CD4-positive, alpha-beta T cell (primary cell): ENCODE measurements at regions of chr11 and their contacts with region 1.

Region 1: DNA sequence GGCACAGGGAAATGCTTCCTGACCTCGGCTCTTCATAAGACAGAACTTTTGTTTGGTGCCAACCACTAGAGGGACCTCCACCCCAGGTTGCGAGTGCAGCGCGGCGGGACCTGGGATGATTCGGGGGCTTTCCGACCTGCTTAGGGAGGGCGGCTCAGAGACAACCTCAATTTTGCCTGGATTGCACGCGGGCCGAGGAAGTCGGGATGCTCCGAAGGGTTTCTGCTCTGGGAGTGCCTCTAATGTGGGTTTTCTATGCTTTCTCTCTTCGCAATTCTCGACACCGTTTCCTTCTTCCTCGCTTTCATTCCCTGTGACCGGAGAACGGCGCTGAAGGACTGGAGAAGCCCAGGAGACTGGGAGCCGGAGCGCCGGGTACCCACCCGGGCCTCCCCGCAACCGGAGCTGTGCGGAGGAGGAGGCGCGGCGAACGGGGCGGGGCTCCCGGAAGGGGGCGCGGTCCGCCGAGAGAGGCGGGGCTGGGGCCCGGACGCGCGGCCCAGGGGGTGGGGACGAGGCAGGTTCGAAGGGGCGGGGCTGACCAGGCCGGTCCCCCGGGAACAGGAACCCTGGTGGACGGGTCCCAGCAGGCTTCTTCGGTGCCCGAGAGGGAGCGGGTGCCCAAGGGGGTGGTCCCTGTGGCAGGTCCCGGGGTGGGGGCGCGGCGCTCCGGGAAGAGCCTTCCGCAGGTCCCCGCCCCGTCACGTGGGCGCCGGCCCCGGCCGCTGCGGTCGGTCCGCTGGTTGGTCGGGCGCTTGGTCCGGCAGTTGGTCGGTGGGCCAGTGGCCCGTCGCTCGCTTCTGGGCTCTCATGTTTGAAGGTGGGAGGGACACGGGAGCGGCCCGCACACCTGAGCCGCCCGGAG is at the start of gene PPFIBP2:
- DNase-seq: peak; percentile 70 to 91 (median 80)
- ATAC-seq: peak; percentile 86
- H3K4me3 ChIP-seq: peak within 1 kb of the TSS; percentile 99
- H3K4me3 Mint-ChIP-seq: peak within 1 kb of the TSS; percentile 99
- H3K27ac ChIP-seq: peak within 1 kb of the TSS; percentile 81 to 84
- H3K27ac Mint-ChIP-seq: peak within 1 kb of the TSS; percentile 97
- H3K4me1 ChIP-seq: peaks cover 18% of the 10 kb centered on the region
- H3K4me1 Mint-ChIP-seq: peaks cover 64% of the 10 kb centered on the region
- H3K27me3 ChIP-seq: no peaks in the 10 kb centered on the region
- H3K27me3 Mint-ChIP-seq: no peaks in the 10 kb centered on the region
- CTCF ChIP-seq: peak; percentile 92
- total RNA-seq, gene PPFIBP2: 27.0 to 35.9 TPM

Region 2: GRCh38 chr11:6419009-6419631 is 1094.3 kb before region 1 on chr11 and contains the start of gene APBB1:
- CTCF ChIA-PET with region 1: no interaction called
- POLR2A ChIA-PET with region 1: no interaction called
- intact Hi-C with region 1: loop called in 1 of 2 experiments (anchors 10 kb)
- DNase-seq: peak; percentile 61 to 91 (median 74)
- ATAC-seq: peak; percentile 68
- H3K4me3 ChIP-seq: peak within 1 kb of the TSS; percentile 70
- H3K4me3 Mint-ChIP-seq: peak within 1 kb of the TSS; percentile 91
- H3K27ac ChIP-seq: peak within 1 kb of the TSS; percentile 49 to 92
- H3K27ac Mint-ChIP-seq: peak within 1 kb of the TSS; percentile 89
- H3K4me1 ChIP-seq: peaks cover 49% of the 10 kb centered on the region
- H3K4me1 Mint-ChIP-seq: peaks cover 10% of the 10 kb centered on the region
- H3K27me3 ChIP-seq: no peaks in the 10 kb centered on the region
- H3K27me3 Mint-ChIP-seq: peaks cover 7% of the 10 kb centered on the region
- CTCF ChIP-seq: no peak
- total RNA-seq, gene APBB1: 182 to 184 TPM

Region 3: GRCh38 chr11:7422544-7423331 is 90.7 kb before region 1 on chr11:
- CTCF ChIA-PET with region 1: no interaction called
- POLR2A ChIA-PET with region 1: no interaction called
- intact Hi-C with region 1: no loop called
- DNase-seq: peak in 3 of 14 experiments; percentile 7 to 24 (median 11)
- ATAC-seq: peak; percentile 32
- H3K4me3 ChIP-seq: no peak overlapping the region
- H3K4me3 Mint-ChIP-seq: no peak overlapping the region
- H3K27ac ChIP-seq: no peak overlapping the region
- H3K27ac Mint-ChIP-seq: no peak overlapping the region
- H3K4me1 ChIP-seq: peaks cover 13% of the 10 kb centered on the region
- H3K4me1 Mint-ChIP-seq: peaks cover 17% of the 10 kb centered on the region
- H3K27me3 ChIP-seq: no peaks in the 10 kb centered on the region
- H3K27me3 Mint-ChIP-seq: no peaks in the 10 kb centered on the region
- CTCF ChIP-seq: no peak

Region 4: GRCh38 chr11:7527029-7527428 is 13.6 kb after region 1 on chr11:
- CTCF ChIA-PET with region 1: interaction called, 9 read pairs
- POLR2A ChIA-PET with region 1: interaction called, 30 read pairs
- intact Hi-C with region 1: loop called in 1 of 2 experiments (anchors 1 kb)
- DNase-seq: peak in 12 of 14 experiments; percentile 8 to 84 (median 38)
- ATAC-seq: peak; percentile 97
- H3K4me3 ChIP-seq: peak overlapping the region; percentile 20
- H3K4me3 Mint-ChIP-seq: peak overlapping the region; percentile 43
- H3K27ac ChIP-seq: peak overlapping the region in 1 of 2 donors; percentile 46
- H3K27ac Mint-ChIP-seq: peak overlapping the region; percentile 86
- H3K4me1 ChIP-seq: peaks cover 20% of the 10 kb centered on the region
- H3K4me1 Mint-ChIP-seq: peaks cover 86% of the 10 kb centered on the region
- H3K27me3 ChIP-seq: no peaks in the 10 kb centered on the region
- H3K27me3 Mint-ChIP-seq: no peaks in the 10 kb centered on the region
- CTCF ChIP-seq: no peak

Region 5: GRCh38 chr11:7548659-7549274 is 35.3 kb after region 1 on chr11:
- CTCF ChIA-PET with region 1: interaction called, 3 read pairs
- POLR2A ChIA-PET with region 1: interaction called, 3 read pairs
- intact Hi-C with region 1: loop called (anchors 1 kb)
- DNase-seq: peak in 6 of 14 experiments; percentile 5 to 55 (median 32)
- ATAC-seq: peak; percentile 82
- H3K4me3 ChIP-seq: no peak overlapping the region
- H3K4me3 Mint-ChIP-seq: no peak overlapping the region
- H3K27ac ChIP-seq: no peak overlapping the region
- H3K27ac Mint-ChIP-seq: no peak overlapping the region
- H3K4me1 ChIP-seq: no peaks in the 10 kb centered on the region
- H3K4me1 Mint-ChIP-seq: peaks cover 26% of the 10 kb centered on the region
- H3K27me3 ChIP-seq: no peaks in the 10 kb centered on the region
- H3K27me3 Mint-ChIP-seq: no peaks in the 10 kb centered on the region
- CTCF ChIP-seq: peak; percentile 57

Region 6: DNA sequence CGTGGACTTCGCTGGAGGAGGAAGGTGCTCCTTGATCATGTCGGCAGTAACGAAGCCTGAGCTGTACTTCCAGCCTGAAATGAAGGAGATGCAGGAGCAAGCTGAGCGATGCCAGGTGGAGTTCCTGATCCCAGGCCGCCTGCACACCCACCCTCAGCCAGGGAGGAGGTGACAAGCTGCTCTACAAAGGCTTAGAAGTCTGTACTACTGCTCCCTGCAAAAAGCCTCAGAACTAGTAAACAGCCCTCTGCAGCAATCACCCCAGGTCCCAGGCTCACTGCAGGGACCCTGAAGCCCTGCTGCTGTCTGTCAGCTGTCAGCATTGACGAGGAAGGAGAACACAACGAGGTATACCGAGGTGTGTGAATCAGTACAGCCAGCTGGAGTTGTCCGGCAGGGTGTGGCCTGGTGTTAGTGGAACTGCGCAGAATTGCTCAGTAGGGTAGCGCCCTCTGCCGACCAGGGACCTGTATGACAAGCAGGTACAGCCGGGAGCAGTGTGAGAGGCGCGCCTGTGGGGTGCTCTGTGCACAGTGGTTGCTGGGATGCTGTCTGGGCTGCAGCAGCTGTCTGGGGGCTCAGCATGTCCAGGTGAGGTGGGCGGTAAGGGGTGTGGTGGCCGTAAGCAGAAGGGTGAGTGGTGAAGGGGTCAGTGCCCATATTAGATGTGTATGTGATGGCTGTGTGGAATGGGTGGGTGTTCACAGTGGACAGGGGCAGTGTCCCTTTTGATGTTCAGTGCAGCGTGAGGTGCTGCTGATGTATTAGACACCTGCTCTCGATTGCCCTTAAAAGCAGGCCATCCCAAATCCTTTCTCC is 152.2 kb after region 1 on chr11:
- CTCF ChIA-PET with region 1: interaction called, 10 read pairs
- POLR2A ChIA-PET with region 1: no interaction called
- intact Hi-C with region 1: loop called (anchors 1 kb)
- DNase-seq: peak; percentile 39 to 82 (median 60)
- ATAC-seq: peak; percentile 97
- H3K4me3 ChIP-seq: no peak overlapping the region
- H3K4me3 Mint-ChIP-seq: no peak overlapping the region
- H3K27ac ChIP-seq: no peak overlapping the region
- H3K27ac Mint-ChIP-seq: no peak overlapping the region
- H3K4me1 ChIP-seq: no peaks in the 10 kb centered on the region
- H3K4me1 Mint-ChIP-seq: no peaks in the 10 kb centered on the region
- H3K27me3 ChIP-seq: peaks cover 0 to 3% of the 10 kb centered on the region in 2 experiments
- H3K27me3 Mint-ChIP-seq: peaks cover 8% of the 10 kb centered on the region
- CTCF ChIP-seq: peak; percentile 93

Region 7: DNA sequence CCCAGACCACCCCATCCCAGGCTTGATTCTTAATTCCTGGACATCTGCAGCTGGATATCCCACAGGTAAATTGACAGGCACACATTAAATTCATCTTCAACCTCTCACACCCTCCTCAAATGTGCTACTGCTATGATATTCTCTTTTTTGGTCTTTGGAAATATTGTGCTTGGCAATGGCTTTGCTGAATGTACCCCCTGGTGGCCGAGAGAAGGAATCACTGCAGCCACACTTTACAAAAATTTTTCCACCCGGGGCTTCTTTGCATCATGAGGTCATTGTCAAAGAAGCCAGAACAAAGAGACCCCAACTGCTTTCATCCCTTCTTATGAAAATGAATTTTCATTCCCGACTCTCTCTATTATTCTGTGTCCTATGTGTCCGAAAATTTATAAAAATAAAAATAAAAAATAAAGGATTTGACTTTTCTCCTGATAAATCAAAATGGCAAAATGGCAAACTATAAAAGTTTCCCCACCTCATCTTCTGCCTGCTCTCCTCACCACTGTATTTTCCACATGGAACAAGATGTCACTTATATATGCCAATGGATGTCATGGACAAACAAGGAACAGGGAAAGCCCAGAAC is 174.9 kb after region 1 on chr11:
- CTCF ChIA-PET with region 1: no interaction called
- POLR2A ChIA-PET with region 1: no interaction called
- intact Hi-C with region 1: loop called in 1 of 2 experiments (anchors 2 kb)
- DNase-seq: peak in 4 of 14 experiments; percentile 13 to 55 (median 36)
- ATAC-seq: peak; percentile 51
- H3K4me3 ChIP-seq: no peak overlapping the region
- H3K4me3 Mint-ChIP-seq: no peak overlapping the region
- H3K27ac ChIP-seq: no peak overlapping the region
- H3K27ac Mint-ChIP-seq: no peak overlapping the region
- H3K4me1 ChIP-seq: no peaks in the 10 kb centered on the region
- H3K4me1 Mint-ChIP-seq: no peaks in the 10 kb centered on the region
- H3K27me3 ChIP-seq: peaks cover 8 to 28% of the 10 kb centered on the region in 2 experiments
- H3K27me3 Mint-ChIP-seq: peaks cover 47% of the 10 kb centered on the region
- CTCF ChIP-seq: peak; percentile 89